ENCODE measurements at regions of chr3 and their contacts with region 1.

Region 1: GRCh38 chr3:52144034-52144795 is 10.0 kb downstream of the POC1A start:
- DNase-seq: peak; percentile 83 to 90
- ATAC-seq: peak; percentile 75 to 83 (median 79)
- H3K4me3 ChIP-seq: no peak overlapping the region
- H3K27ac ChIP-seq: no peak overlapping the region
- H3K4me1 ChIP-seq: peaks cover 19% of the 10 kb centered on the region
- H3K27me3 ChIP-seq: no peaks in the 10 kb centered on the region
- CTCF ChIP-seq: peak; percentile 97

Region 2: DNA sequence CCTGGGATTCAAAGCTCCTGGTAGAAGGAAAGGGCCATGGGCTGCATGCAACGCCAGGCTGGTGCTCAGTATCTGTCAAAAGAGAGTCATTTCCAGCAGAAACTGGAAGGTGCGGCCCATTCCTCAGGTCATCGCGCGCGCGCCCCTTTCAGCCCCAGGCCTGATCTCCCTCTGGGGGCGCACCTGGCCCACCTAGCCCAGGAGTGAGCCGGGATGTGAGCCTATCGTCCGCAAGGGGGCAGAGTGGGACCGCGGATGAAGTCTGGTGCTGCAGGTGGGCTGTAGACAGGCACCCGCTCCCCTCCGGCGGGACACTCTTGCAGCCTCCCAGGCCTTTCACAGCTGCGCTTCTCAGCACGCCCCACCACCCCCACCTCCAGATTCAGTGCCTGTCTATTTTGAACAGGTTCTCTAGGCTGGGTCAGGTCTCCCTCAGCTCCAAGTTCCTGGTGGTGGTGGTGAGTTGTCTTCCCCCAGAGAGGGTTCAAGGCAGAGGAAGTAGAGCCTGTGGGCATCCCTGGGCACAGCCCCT is 142.7 kb before region 1 on chr3:
- intact Hi-C with region 1: loop called (anchors 1 to 2 kb)
- DNase-seq: peak; percentile 77 to 89
- ATAC-seq: peak; percentile 81 to 86 (median 84)
- H3K4me3 ChIP-seq: no peak overlapping the region
- H3K27ac ChIP-seq: no peak overlapping the region
- H3K4me1 ChIP-seq: peaks cover 26% of the 10 kb centered on the region
- H3K27me3 ChIP-seq: no peaks in the 10 kb centered on the region
- CTCF ChIP-seq: peak; percentile 92

Measured in psoas muscle (tissue), 8 donors.